ENCODE measurements at regions of chr5 and their contacts with region 1.

Region 1: GRCh38 chr5:170021506-170021905 is 41.2 kb upstream of the INSYN2B start:
- DNase-seq: no peak

Region 2: GRCh38 chr5:169050146-169050571 is 971.3 kb before region 1 on chr5:
- intact Hi-C with region 1: no loop called
- DNase-seq: no peak

Region 3: DNA sequence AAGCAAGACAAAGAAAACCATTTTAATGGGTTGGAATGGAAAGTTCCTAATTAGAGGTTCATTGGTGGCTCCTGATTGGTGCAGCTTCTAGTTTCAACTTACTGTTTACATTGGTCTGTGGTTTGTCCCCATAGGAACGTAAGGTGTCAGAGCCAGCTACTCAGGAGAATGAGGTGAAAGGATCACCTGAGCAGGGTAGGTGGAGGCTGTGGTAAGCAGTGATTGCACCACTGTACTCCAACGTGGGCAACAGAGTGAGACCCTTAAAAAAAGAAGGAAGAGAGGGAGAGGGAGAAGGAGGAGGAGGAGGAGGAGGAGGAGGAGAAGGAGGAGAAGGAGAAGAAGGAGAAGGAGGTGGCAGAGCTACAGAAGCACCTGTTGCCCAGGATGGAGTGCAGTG is 512.7 kb after region 1 on chr5:
- intact Hi-C with region 1: no loop called
- DNase-seq: no peak

Region 4: DNA sequence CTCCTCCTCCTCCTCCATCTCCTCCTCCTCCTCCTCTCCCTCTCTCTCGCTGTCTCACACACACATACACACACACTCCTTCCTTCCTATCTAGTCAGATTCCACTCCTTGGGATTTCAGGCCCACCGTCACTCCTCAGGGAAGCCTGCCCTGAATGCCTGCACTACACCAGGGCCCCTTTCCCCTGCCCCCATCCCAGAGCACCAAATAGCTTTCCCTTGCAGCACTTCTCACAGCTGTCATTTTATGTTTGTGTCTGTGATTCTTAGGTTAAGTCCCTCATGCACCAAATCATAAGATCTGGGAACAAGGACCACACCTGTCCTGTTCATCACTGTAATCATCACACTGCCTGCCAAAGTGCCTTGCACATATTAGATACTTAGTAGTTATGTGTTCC is 675.5 kb after region 1 on chr5:
- intact Hi-C with region 1: loop called in 1 of 2 experiments (anchors 5 kb)
- DNase-seq: no peak

Measured in posterior vena cava (tissue), 2 donors.